CD4-positive, alpha-beta T cell (primary cell): ENCODE measurements at regions of chr9 and their contacts with region 1.

Region 1: DNA sequence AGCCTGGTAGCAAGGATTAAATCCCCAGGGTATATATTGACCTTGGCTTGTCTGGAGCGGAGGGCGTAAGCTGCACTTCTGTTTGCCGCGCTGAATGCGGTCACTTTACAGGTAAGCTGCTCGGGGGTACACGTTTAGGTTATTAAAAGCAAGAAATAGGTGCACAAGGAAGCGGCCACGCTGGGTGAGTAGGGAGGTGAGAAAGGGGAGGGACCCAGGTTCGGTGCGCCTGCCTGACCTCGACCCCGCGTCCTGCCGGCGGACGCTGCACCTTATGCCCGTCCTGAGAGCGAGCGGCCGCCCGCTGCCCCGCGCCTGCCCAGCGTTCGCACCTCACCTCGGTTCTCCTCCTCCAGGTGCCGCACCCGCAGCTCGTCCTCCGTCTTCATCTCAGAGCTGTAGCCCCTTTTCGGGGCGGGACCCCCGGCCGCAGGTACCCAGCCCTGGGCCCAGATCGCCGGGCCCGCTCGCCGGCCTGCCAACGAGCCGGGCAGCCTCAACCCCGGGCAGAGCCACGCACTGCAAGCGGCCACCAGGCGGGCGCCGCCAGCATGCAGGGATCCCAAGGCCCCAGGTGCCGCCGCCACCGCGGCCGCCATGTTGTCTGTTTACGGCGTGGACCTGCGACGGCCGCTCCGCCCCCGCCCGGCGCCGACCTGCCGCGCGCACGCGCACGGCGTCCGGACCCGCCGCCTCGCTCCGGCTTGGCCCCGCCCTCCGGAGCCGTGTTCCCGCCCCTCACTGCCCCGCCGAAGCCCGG is at the start of gene AUH:
- DNase-seq: peak; percentile 73 to 95 (median 82)
- ATAC-seq: peak; percentile 96
- H3K4me3 ChIP-seq: peak within 1 kb of the TSS; percentile 67
- H3K4me3 Mint-ChIP-seq: peak within 1 kb of the TSS; percentile 99
- H3K27ac ChIP-seq: peak within 1 kb of the TSS in 1 of 2 donors; percentile 58
- H3K27ac Mint-ChIP-seq: peak within 1 kb of the TSS; percentile 91
- H3K4me1 ChIP-seq: peaks cover 27% of the 10 kb centered on the region
- H3K4me1 Mint-ChIP-seq: peaks cover 51% of the 10 kb centered on the region
- H3K27me3 ChIP-seq: no peaks in the 10 kb centered on the region
- H3K27me3 Mint-ChIP-seq: no peaks in the 10 kb centered on the region
- CTCF ChIP-seq: no peak
- total RNA-seq, gene AUH: 16.2 to 17.4 TPM

Region 2: DNA sequence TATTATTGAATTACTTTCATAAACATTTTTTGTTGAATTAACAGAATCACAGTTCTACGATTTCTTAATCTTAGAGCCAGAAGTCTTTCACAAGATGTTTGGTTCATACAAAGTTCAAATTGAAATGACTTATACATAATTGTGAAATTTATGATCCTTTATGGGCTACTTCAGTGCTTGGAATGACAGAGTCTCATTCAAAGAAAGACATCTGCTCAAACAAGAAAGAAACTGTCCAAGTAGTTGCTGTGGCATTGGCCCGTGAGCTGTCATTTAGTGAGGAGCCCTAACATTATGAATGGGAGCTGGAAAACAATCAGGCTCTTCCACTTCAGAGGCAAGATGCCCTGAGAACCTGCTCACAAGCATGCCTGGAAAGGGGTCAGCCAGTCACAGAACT is 63.2 kb before region 1 on chr9:
- CTCF ChIA-PET with region 1: no interaction called
- POLR2A ChIA-PET with region 1: no interaction called
- intact Hi-C with region 1: no loop called
- DNase-seq: peak in 3 of 14 experiments; percentile 1 to 16 (median 15)
- ATAC-seq: no peak
- H3K4me3 ChIP-seq: no peak overlapping the region
- H3K4me3 Mint-ChIP-seq: no peak overlapping the region
- H3K27ac ChIP-seq: no peak overlapping the region
- H3K27ac Mint-ChIP-seq: no peak overlapping the region
- H3K4me1 ChIP-seq: no peaks in the 10 kb centered on the region
- H3K4me1 Mint-ChIP-seq: no peaks in the 10 kb centered on the region
- H3K27me3 ChIP-seq: no peaks in the 10 kb centered on the region
- H3K27me3 Mint-ChIP-seq: no peaks in the 10 kb centered on the region
- CTCF ChIP-seq: no peak

Region 3: DNA sequence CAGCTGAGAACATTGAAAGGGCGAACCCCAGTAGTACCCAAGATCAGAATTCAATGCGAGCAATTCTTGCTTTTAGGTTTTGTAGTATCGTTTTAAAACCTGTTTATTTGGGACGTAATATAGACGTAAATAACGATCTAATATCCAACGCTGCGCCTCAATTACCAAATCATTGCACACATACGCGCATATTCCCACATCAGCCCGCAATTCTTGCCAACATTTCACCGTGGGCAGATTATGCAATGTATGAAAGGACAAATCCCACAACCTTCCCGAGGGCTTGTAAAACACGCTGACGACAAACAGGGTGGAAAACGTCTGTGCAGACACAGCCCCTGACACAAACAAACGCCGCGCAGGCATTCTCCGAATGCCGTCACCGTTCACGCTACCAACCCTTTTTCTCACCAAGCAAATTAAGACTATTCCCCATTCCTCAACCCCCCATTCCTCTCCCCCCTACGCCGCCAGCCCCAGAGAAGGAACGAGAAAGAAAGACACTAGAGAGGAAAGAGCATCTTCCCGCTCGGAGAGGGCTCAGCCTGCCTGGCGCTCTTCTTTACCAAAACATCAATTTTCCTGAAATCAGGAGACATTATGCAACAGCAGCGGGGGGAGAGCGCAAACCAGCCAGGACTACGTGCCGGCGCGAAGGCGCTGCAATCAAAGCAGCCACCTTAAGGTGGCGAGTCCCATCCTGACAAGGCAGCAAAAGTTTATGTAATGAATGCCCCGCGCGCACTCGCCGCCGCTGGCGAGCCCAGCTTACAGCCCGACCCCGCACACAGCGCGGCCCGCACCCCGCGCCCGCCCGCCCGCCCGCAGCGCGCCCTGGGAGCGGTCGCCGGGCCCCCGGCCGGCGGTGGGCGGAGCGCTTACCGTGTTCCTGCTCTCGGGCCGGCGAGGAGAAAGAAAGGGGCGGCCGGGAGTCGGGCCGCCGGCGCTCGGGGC is 61.6 kb after region 1 on chr9:
- CTCF ChIA-PET with region 1: no interaction called
- POLR2A ChIA-PET with region 1: interaction called, 4 read pairs
- intact Hi-C with region 1: loop called (anchors 2 to 5 kb)
- DNase-seq: peak; percentile 22 to 85 (median 49)
- ATAC-seq: peak; percentile 50
- H3K4me3 ChIP-seq: peak overlapping the region; percentile 73
- H3K4me3 Mint-ChIP-seq: peak overlapping the region; percentile 96
- H3K27ac ChIP-seq: no peak overlapping the region
- H3K27ac Mint-ChIP-seq: peak overlapping the region; percentile 82
- H3K4me1 ChIP-seq: peaks cover 45% of the 10 kb centered on the region
- H3K4me1 Mint-ChIP-seq: peaks cover 45% of the 10 kb centered on the region
- H3K27me3 ChIP-seq: peaks cover 22 to 42% of the 10 kb centered on the region in 2 experiments
- H3K27me3 Mint-ChIP-seq: peaks cover 52% of the 10 kb centered on the region
- CTCF ChIP-seq: peak; percentile 16

Region 4: DNA sequence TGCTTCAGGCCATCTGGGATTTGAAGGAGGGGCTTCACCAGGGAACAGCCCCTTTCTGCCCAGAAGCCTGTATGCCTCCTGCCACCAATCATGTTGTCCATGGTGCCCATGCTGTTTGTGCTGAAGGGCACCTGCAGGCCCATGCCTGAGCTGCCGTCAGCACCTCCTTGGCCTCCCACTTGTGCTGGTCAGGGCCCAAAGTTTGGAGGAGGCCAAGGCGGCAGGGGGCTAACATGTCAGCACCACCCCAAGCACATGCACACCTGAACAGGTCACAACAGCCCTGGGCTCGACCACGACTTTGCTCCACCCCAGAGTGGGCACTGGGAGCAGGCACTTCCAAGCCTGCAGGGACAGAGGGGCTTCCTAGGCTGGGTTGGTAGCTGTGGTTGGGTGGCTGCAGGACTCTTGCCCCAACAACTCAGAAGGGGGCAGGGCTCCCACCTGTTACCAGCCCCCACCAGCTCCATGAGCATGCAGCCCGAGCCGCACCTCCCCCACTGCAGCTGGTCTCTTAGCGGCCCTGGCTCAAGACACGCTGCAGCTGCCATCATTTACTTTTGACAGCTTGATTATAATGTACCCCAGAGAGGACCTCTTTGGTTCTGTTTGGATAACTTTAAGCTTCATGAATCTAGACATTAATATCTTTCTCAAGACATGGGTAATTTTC is 82.0 kb after region 1 on chr9:
- CTCF ChIA-PET with region 1: no interaction called
- POLR2A ChIA-PET with region 1: no interaction called
- intact Hi-C with region 1: no loop called
- DNase-seq: no peak
- ATAC-seq: no peak
- H3K4me3 ChIP-seq: no peak overlapping the region
- H3K4me3 Mint-ChIP-seq: no peak overlapping the region
- H3K27ac ChIP-seq: no peak overlapping the region
- H3K27ac Mint-ChIP-seq: no peak overlapping the region
- H3K4me1 ChIP-seq: no peaks in the 10 kb centered on the region
- H3K4me1 Mint-ChIP-seq: no peaks in the 10 kb centered on the region
- H3K27me3 ChIP-seq: peaks cover 11 to 16% of the 10 kb centered on the region in 2 experiments
- H3K27me3 Mint-ChIP-seq: peaks cover 59% of the 10 kb centered on the region
- CTCF ChIP-seq: no peak